Naive thymus-derived CD4-positive, alpha-beta T cell (primary cell): ENCODE measurements at regions of chr3 and their contacts with region 1.

Region 1: DNA sequence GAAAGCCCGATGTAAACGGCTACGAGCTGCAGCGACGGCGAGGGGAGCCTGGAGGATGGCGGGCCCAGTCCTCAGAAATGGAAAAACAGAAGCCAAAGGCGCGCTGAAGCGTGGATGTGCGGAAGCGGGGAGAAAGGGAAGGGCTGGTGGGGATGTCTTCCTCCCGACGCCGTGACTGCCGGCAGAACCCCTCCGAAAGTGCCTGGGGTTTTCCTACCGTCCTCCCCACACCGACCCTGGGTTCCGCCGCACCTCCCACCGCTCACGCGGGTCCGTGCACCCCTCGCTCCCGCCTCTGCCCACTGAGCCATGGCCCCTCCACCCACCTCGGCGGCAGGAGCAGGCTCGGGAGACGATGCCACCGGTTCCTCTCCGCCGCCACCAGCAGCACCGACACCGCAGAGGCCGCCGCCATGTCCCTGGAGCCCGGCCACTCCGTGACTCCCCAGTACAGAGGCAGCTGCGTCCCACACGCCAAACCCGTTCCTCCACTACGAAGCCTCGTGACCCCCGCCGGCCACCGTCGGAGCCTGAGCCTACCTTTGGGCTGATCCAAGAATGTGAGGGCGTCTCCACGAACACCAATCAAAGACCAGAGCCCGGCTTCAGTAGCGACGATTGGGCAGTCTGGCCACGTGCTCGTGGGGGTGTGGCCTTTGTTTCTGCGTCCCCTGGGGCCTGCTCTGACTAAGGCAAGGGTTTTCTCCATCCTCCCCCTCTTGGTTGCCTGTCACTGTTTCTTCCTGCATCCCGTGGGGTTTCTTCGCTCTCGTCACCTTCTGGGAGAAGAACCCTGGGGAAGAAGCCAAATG is at the start of gene MCCC1:
- DNase-seq: peak; percentile 82 to 98 (median 97)
- ATAC-seq: peak; percentile 99
- H3K4me3 ChIP-seq: peak within 1 kb of the TSS; percentile 73
- H3K4me3 Mint-ChIP-seq: peak within 1 kb of the TSS; percentile 87 to 98 (median 97)
- H3K27ac ChIP-seq: peak within 1 kb of the TSS; percentile 83
- H3K27ac Mint-ChIP-seq: peak within 1 kb of the TSS; percentile 90 to 99 (median 97)
- H3K4me1 ChIP-seq: peaks cover 7 to 10% of the 10 kb centered on the region in 2 donors
- H3K4me1 Mint-ChIP-seq: peaks cover 18 to 52% (median 43%) of the 10 kb centered on the region in 7 donors
- H3K27me3 ChIP-seq: no peaks in the 10 kb centered on the region
- H3K27me3 Mint-ChIP-seq: no peaks in the 10 kb centered on the region
- total RNA-seq, gene MCCC1: 17.7 to 37.5 (median 31.8) TPM

Region 2: GRCh38 chr3:182909318-182910040 is 189.8 kb before region 1 on chr3:
- CTCF ChIA-PET with region 1: interaction called, 4 read pairs
- POLR2A ChIA-PET with region 1: no interaction called
- intact Hi-C with region 1: loop called in 1 of 2 experiments (anchors 2 kb)
- DNase-seq: peak in 1 of 9 donors; percentile 16
- ATAC-seq: peak; percentile 46
- H3K4me3 ChIP-seq: no peak overlapping the region
- H3K4me3 Mint-ChIP-seq: no peak overlapping the region
- H3K27ac ChIP-seq: peak overlapping the region; percentile 16
- H3K27ac Mint-ChIP-seq: peak overlapping the region in 8 of 9 donors; percentile 20 to 88 (median 72)
- H3K4me1 ChIP-seq: peaks cover 15 to 17% of the 10 kb centered on the region in 2 donors
- H3K4me1 Mint-ChIP-seq: peaks cover 22 to 50% (median 42%) of the 10 kb centered on the region in 7 donors
- H3K27me3 ChIP-seq: no peaks in the 10 kb centered on the region
- H3K27me3 Mint-ChIP-seq: no peaks in the 10 kb centered on the region

Region 3: DNA sequence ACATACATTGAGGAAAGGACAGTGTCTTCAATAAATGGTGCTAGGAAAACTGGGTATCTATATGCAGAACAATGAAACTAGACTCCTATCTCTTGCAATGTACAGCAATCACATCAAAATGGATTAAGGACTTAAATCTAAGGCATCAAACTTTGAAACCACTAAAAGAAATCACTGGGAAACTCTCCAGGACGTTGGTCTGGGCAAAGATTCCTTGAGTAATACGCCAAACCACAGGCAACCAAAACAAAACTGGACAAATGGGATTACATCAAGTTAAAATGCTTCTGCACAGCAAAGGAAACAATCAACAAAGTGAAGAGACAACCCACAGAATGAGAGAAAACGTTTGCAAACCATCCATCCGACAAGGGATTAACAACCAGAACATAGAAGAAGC is 48.8 kb after region 1 on chr3:
- CTCF ChIA-PET with region 1: no interaction called
- POLR2A ChIA-PET with region 1: no interaction called
- intact Hi-C with region 1: no loop called
- DNase-seq: no peak
- ATAC-seq: no peak
- H3K4me3 ChIP-seq: no peak overlapping the region
- H3K4me3 Mint-ChIP-seq: no peak overlapping the region
- H3K27ac ChIP-seq: no peak overlapping the region
- H3K27ac Mint-ChIP-seq: no peak overlapping the region
- H3K4me1 ChIP-seq: no peaks in the 10 kb centered on the region
- H3K4me1 Mint-ChIP-seq: no peaks in the 10 kb centered on the region
- H3K27me3 ChIP-seq: no peaks in the 10 kb centered on the region
- H3K27me3 Mint-ChIP-seq: peaks cover 0 to 2% (median 0%) of the 10 kb centered on the region in 5 donors

Region 4: DNA sequence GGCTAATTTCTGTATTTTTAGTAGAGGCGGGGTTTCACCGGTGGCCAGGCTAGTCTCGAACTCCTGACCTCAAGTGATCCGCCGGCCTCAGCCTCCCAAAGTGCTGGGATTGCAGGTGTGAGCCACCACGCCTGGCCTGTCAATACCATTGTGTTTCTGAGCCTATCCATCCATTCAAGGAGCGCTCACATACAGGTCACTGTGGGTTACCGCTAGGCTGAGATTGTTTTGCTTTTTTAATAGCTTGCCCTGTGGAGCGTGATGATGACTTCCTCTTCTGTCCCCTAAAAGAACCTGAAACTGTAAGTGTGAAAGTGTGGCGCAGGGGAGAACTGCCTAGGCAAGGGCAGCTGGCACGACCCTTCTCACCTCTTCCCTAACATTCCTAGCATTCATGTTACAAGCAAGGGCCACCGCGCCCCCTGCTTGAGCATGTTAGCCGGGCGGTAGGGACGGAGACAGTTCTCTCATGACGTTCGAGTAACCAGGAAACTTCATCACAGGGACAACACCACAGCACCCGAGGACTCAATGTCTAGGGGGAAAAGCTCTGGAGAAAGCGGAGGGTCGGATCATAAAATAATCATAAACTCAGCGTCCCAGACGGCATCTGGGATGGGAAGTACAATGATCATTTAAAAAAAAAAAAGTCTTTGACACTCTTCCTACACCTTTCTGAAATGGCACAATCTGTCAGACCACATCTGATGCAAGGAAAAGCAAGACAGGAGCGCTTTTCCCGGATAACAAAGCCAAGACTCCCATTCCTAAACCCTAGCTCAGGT is 62.5 kb after region 1 on chr3:
- CTCF ChIA-PET with region 1: no interaction called
- POLR2A ChIA-PET with region 1: no interaction called
- intact Hi-C with region 1: loop called (anchors 1 kb)
- DNase-seq: peak in 4 of 9 donors; percentile 12 to 18 (median 14)
- ATAC-seq: no peak
- H3K4me3 ChIP-seq: peak overlapping the region; percentile 92
- H3K4me3 Mint-ChIP-seq: peak overlapping the region; percentile 80 to 97 (median 90)
- H3K27ac ChIP-seq: peak overlapping the region; percentile 61
- H3K27ac Mint-ChIP-seq: peak overlapping the region; percentile 46 to 90 (median 76)
- H3K4me1 ChIP-seq: peaks cover 5% of the 10 kb centered on the region in 2 donors
- H3K4me1 Mint-ChIP-seq: peaks cover 8 to 33% (median 9%) of the 10 kb centered on the region in 7 donors
- H3K27me3 ChIP-seq: no peaks in the 10 kb centered on the region
- H3K27me3 Mint-ChIP-seq: peaks cover 0 to 3% (median 0%) of the 10 kb centered on the region in 5 donors

Region 5: GRCh38 chr3:183697610-183698317 is 598.5 kb after region 1 on chr3 and contains the start of gene YEATS2:
- CTCF ChIA-PET with region 1: no interaction called
- POLR2A ChIA-PET with region 1: no interaction called
- intact Hi-C with region 1: loop called (anchors 1 to 5 kb)
- DNase-seq: peak; percentile 60 to 81 (median 74)
- ATAC-seq: peak; percentile 95
- H3K4me3 ChIP-seq: peak within 1 kb of the TSS; percentile 89
- H3K4me3 Mint-ChIP-seq: peak within 1 kb of the TSS; percentile 84 to 99 (median 94)
- H3K27ac ChIP-seq: peak within 1 kb of the TSS; percentile 84
- H3K27ac Mint-ChIP-seq: peak within 1 kb of the TSS; percentile 74 to 97 (median 90)
- H3K4me1 ChIP-seq: peaks cover 9 to 18% of the 10 kb centered on the region in 2 donors
- H3K4me1 Mint-ChIP-seq: peaks cover 32 to 50% (median 40%) of the 10 kb centered on the region in 7 donors
- H3K27me3 ChIP-seq: no peaks in the 10 kb centered on the region
- H3K27me3 Mint-ChIP-seq: no peaks in the 10 kb centered on the region
- total RNA-seq, gene YEATS2: 20.6 to 61.4 (median 21.9) TPM

Region 6: GRCh38 chr3:184174646-184175492 is 1075.6 kb after region 1 on chr3 and contains the start of gene AP2M1:
- CTCF ChIA-PET with region 1: no interaction called
- POLR2A ChIA-PET with region 1: no interaction called
- intact Hi-C with region 1: loop called in 1 of 2 experiments (anchors 1 kb)
- DNase-seq: peak; percentile 98 to 99 (median 98)
- ATAC-seq: peak; percentile 98
- H3K4me3 ChIP-seq: peak within 1 kb of the TSS; percentile 82
- H3K4me3 Mint-ChIP-seq: peak within 1 kb of the TSS; percentile 89 to 98 (median 96)
- H3K27ac ChIP-seq: peak within 1 kb of the TSS; percentile 95
- H3K27ac Mint-ChIP-seq: peak within 1 kb of the TSS; percentile 75 to 94 (median 90)
- H3K4me1 ChIP-seq: peaks cover 18 to 20% of the 10 kb centered on the region in 2 donors
- H3K4me1 Mint-ChIP-seq: peaks cover 14 to 46% (median 38%) of the 10 kb centered on the region in 7 donors
- H3K27me3 ChIP-seq: no peaks in the 10 kb centered on the region
- H3K27me3 Mint-ChIP-seq: no peaks in the 10 kb centered on the region
- total RNA-seq, gene AP2M1: 111 to 217 (median 185) TPM